Common myeloid progenitor, CD34-positive (primary cell): ENCODE measurements at regions of chr12 and their contacts with region 1.

Region 1: DNA sequence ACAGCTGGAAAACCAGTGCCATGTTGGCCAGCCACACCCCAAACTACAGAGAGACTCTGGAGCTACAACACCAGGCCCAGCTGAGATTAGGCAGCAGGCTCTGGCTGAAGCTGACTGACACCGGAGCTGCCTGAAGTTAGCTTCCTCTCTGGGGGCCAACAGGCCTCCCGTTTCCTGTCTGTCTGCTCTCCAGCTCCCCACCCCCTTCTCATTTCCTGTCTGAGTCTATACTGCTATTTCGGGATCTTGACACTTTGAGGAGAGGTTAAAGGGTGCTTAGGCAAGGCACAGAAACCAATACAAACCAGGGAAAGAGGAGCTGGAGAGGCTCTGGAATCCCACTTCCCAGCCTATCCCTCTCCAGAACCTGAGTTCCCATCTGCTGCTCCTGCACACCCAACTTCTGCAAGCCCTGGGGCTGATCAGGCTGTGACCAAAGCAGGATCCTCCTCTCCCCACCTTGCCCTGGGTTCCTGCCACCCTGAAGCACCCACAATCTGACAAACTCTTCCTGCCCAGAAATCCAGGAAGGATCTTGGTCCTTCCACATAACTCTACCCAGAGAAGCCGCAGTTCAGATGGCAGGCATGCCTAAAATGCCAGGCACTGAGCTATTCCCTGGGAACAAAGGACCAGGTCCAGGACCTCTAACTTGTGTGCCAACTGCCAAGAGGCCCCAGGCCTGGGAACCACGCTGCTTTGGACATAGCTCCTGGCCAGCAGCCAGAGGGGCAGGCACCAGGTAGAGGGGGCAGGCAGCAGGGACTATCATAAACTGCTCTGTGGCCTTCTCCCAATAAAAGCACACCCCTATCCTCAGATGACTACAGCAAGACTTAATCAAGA is 39.9 kb downstream of the PRPF40B start:
- DNase-seq: peak; percentile 68 to 90 (median 86)
- H3K4me3 ChIP-seq: peak overlapping the region in 4 of 7 experiments; percentile 42 to 61 (median 50)
- H3K27ac ChIP-seq: peak overlapping the region; percentile 25 to 75
- H3K4me1 ChIP-seq: peaks cover 23 to 57% (median 51%) of the 10 kb centered on the region in 4 experiments
- H3K27me3 ChIP-seq: no peaks in the 10 kb centered on the region

Region 2: GRCh38 chr12:49347384-49348237 is 315.6 kb before region 1 on chr12:
- CTCF ChIA-PET with region 1: no interaction called
- POLR2A ChIA-PET with region 1: no interaction called
- DNase-seq: peak; percentile 54 to 69 (median 69)
- H3K4me3 ChIP-seq: peak overlapping the region in 5 of 7 experiments; percentile 22 to 66 (median 34)
- H3K27ac ChIP-seq: no peak overlapping the region
- H3K4me1 ChIP-seq: peaks cover 0 to 49% (median 38%) of the 10 kb centered on the region in 4 experiments
- H3K27me3 ChIP-seq: peaks cover 4 to 81% (median 48%) of the 10 kb centered on the region in 5 experiments

Region 3: DNA sequence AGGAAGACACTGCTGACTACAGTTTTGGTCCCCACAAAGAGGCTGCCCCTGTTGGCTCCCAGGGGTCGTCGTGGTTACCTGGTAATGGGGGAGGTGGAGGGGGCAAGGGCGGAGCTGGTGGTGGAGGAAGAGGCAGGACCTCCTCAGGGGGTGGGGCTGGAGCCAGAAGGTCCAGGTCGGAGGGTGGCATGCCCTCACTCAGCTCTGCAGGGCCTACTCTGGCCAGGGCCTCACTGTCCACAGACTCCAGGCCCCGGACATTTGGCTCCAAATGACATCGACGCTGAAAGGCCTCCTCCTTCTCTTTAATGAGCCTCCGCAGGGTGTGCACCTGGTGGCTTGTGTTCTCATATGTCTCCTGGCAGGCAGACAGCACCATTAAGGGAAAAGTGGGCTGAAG is 11.4 kb before region 1 on chr12:
- CTCF ChIA-PET with region 1: interaction called, 167 read pairs
- POLR2A ChIA-PET with region 1: interaction called, 8 read pairs
- DNase-seq: no peak
- H3K4me3 ChIP-seq: no peak overlapping the region
- H3K27ac ChIP-seq: no peak overlapping the region
- H3K4me1 ChIP-seq: peaks cover 0 to 15% (median 6%) of the 10 kb centered on the region in 4 experiments
- H3K27me3 ChIP-seq: no peaks in the 10 kb centered on the region

Region 4: GRCh38 chr12:49678711-49679110 is 15.5 kb after region 1 on chr12:
- CTCF ChIA-PET with region 1: interaction called, 50 read pairs
- POLR2A ChIA-PET with region 1: interaction called, 41 read pairs
- DNase-seq: no peak
- H3K4me3 ChIP-seq: no peak overlapping the region
- H3K27ac ChIP-seq: no peak overlapping the region
- H3K4me1 ChIP-seq: peaks cover 0 to 19% (median 11%) of the 10 kb centered on the region in 4 experiments
- H3K27me3 ChIP-seq: no peaks in the 10 kb centered on the region

Region 5: GRCh38 chr12:49698619-49699545 is 35.7 kb after region 1 on chr12:
- CTCF ChIA-PET with region 1: interaction called, 929 read pairs
- POLR2A ChIA-PET with region 1: interaction called, 6 read pairs
- DNase-seq: peak; percentile 64 to 93 (median 89)
- H3K4me3 ChIP-seq: peak overlapping the region in 5 of 7 experiments; percentile 17 to 56 (median 42)
- H3K27ac ChIP-seq: no peak overlapping the region
- H3K4me1 ChIP-seq: peaks cover 26 to 38% (median 29%) of the 10 kb centered on the region in 4 experiments
- H3K27me3 ChIP-seq: peaks cover 0 to 3% (median 0%) of the 10 kb centered on the region in 5 experiments